ENCODE measurements at regions of chr3 and their contacts with region 1.

Region 1: GRCh38 chr3:85801955-85802354 is 843.2 kb downstream of the CADM2 start:
- DNase-seq: no peak
- ATAC-seq: no peak
- H3K4me3 ChIP-seq: no peak overlapping the region
- H3K27ac ChIP-seq: no peak overlapping the region
- H3K4me1 ChIP-seq: no peaks in the 10 kb centered on the region
- H3K27me3 ChIP-seq: peaks cover 0 to 5% (median 0%) of the 10 kb centered on the region in 7 donors
- CTCF ChIP-seq: peak in 7 of 9 donors; percentile 23 to 52 (median 43)

Region 2: DNA sequence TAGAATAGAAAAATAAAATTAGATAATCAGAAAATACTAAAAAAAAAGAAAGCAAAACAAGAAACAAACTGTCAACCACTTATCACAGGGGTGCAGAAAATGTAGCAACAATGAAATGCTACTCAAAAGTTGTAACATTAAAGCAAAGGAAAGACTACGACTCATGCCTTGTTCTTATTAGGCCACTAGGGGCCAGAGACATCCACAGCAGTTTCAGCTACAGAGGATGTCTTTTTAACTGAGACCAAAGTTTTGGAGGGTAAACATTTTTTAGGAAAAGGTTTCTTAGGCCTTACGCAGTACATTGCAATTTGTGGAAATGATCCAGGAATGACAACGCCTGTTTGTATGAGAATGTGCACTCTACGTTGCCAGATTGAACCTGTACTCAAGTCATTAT is 858.6 kb before region 1 on chr3:
- intact Hi-C with region 1: no loop called
- DNase-seq: no peak
- ATAC-seq: no peak
- H3K4me3 ChIP-seq: no peak overlapping the region
- H3K27ac ChIP-seq: no peak overlapping the region
- H3K4me1 ChIP-seq: no peaks in the 10 kb centered on the region
- H3K27me3 ChIP-seq: peaks cover 0 to 3% (median 0%) of the 10 kb centered on the region in 7 donors
- CTCF ChIP-seq: no peak

Region 3: GRCh38 chr3:85589145-85589544 is 212.8 kb before region 1 on chr3:
- intact Hi-C with region 1: loop called in 1 of 10 experiments (anchors 10 kb)
- DNase-seq: no peak
- ATAC-seq: no peak
- H3K4me3 ChIP-seq: no peak overlapping the region
- H3K27ac ChIP-seq: no peak overlapping the region
- H3K4me1 ChIP-seq: no peaks in the 10 kb centered on the region
- H3K27me3 ChIP-seq: no peaks in the 10 kb centered on the region
- CTCF ChIP-seq: no peak

Region 4: DNA sequence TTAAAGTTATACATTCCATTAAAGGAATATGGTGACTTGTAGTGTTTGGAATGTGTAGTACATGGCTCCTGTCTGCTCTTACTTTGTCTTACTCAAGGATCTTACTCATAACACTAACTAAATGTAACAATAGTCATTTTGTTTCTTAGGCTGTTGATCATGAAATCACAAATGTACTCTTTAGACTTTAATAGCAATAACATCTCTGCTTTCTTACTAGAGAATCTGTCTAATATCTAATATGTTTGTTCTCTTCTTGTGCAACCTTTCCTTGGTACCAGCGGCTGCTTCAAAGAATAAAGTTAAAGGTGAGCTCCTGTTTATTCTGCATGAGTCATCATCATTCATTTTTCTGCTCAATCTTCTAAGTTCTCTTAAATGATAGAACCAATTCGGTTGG is 75.7 kb before region 1 on chr3:
- intact Hi-C with region 1: no loop called
- DNase-seq: no peak
- ATAC-seq: no peak
- H3K4me3 ChIP-seq: no peak overlapping the region
- H3K27ac ChIP-seq: no peak overlapping the region
- H3K4me1 ChIP-seq: no peaks in the 10 kb centered on the region
- H3K27me3 ChIP-seq: no peaks in the 10 kb centered on the region
- CTCF ChIP-seq: no peak

Measured in heart right ventricle (tissue), 16 donors.